ENCODE measurements at regions of chr14 and their contacts with region 1.

Region 1: GRCh38 chr14:88868558-88869159 is 44.2 kb downstream of the TTC8 start:
- H3K4me3 ChIP-seq: no peak overlapping the region
- H3K27ac ChIP-seq: no peak overlapping the region
- H3K4me1 ChIP-seq: no peaks in the 10 kb centered on the region
- CTCF ChIP-seq: no peak

Region 2: GRCh38 chr14:88667555-88668273 is 200.9 kb before region 1 on chr14:
- CTCF ChIA-PET with region 1: interaction called, 25 read pairs
- POLR2A ChIA-PET with region 1: no interaction called
- H3K4me3 ChIP-seq: no peak overlapping the region
- H3K27ac ChIP-seq: no peak overlapping the region
- H3K4me1 ChIP-seq: no peaks in the 10 kb centered on the region
- CTCF ChIP-seq: 0 out of 2 replicates have a peak, but pooled peaks have one; percentile 40

Region 3: DNA sequence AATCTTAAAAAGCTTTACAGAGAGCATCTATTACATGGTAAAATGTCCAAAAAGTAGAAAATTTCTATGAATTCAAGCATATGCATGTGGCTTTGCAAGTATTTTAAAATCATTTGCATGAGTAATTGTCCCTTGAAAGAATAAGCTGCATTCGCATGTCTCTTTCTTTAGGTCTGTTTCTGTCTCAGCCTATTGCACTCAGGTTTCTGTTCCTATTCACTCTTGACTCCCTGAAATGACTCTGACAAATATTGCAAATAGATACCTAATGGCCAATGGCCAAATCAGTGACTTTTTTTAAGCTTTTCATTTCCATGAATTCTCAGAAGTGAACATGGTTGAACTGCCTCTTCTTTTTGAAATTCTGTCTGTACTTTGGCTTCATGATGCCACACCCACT is 50.6 kb before region 1 on chr14:
- CTCF ChIA-PET with region 1: no interaction called
- POLR2A ChIA-PET with region 1: no interaction called
- H3K4me3 ChIP-seq: no peak overlapping the region
- H3K27ac ChIP-seq: no peak overlapping the region
- H3K4me1 ChIP-seq: no peaks in the 10 kb centered on the region
- CTCF ChIP-seq: no peak